T-cell (primary cell): ENCODE measurements at regions of chr2 and their contacts with region 1.

Region 1: DNA sequence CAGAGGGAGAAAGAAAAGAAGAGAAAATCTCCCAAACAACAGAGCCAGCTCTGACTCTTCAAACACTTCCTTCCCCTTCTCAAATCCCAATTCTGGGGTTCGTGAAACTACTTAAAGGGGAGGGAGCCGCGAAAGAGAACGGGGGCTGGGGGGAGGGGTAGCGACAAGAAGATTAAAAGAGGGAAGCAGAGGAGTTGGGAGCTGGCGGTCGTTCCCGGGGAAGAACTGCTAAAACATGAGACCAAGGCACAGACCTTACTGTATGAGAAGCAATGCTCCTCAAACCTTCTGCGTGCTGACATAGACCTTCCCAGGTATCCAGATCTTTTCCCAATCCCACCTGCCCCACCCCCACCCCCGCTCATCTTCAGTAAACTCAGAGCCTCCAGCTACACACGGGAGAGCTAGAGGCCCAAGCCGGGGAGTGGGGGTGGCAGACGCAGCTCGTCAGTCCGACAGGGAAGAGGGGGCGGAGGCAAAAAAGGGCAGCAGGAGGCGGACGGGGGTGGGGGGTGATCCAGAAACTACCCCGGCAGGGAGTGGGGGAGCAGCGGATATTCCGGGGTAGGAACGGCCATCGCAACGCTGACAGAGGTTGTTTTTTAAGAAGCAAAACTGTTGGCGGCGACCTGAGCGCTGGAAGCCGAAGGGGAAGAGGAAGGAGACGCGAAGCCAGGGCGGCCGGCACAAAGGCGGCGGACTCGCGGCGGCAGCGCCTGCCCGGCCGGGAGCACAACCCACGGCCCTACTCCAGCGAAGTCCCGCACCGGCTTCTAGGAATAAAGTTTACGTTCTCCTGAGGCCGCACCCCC is 1.0 kb downstream of the BAZ2B start:
- DNase-seq: peak in 33 of 35 experiments; percentile 2 to 52 (median 20)
- ATAC-seq: peak; percentile 66 to 78 (median 75)
- H3K4me3 ChIP-seq: peak overlapping the region; percentile 55 to 90
- H3K4me3 Mint-ChIP-seq: peak overlapping the region; percentile 84 to 91 (median 86)
- H3K27ac ChIP-seq: no peak overlapping the region
- H3K27ac Mint-ChIP-seq: no peak overlapping the region
- H3K4me1 ChIP-seq: peaks cover 9 to 13% of the 10 kb centered on the region in 2 experiments
- H3K4me1 Mint-ChIP-seq: peaks cover 13 to 16% (median 15%) of the 10 kb centered on the region in 3 donors
- H3K27me3 ChIP-seq: peaks cover 0 to 13% of the 10 kb centered on the region in 2 experiments
- H3K27me3 Mint-ChIP-seq: peaks cover 17 to 30% of the 10 kb centered on the region in 2 donors

Region 2: DNA sequence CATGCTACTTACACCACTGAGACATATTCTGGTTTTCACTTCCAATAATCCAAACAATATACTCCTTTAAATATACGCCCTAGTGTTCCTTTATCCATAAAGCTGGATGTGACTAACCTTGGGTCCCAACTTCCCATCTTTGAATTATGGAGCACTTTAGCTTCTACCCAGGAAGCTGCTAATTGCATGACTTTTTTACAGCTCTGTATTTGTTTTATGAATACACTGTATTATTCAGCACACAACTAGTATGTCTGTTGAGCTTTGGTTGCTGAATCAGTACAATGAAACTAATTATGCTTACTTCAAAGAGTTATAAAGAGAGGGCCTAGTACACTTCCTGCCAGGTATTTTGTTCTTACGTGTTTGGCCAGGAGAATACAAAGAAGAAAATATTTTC is 117.5 kb before region 1 on chr2:
- CTCF ChIA-PET with region 1: no interaction called
- POLR2A ChIA-PET with region 1: interaction called in 1 of 2 experiments, 10 read pairs
- DNase-seq: no peak
- ATAC-seq: peak in 1 of 4 experiments; percentile 29
- H3K4me3 ChIP-seq: no peak overlapping the region
- H3K4me3 Mint-ChIP-seq: no peak overlapping the region
- H3K27ac ChIP-seq: no peak overlapping the region
- H3K27ac Mint-ChIP-seq: peak overlapping the region; percentile 28 to 79
- H3K4me1 ChIP-seq: peaks cover 0 to 4% of the 10 kb centered on the region in 2 experiments
- H3K4me1 Mint-ChIP-seq: peaks cover 10 to 12% (median 11%) of the 10 kb centered on the region in 3 donors
- H3K27me3 ChIP-seq: no peaks in the 10 kb centered on the region
- H3K27me3 Mint-ChIP-seq: no peaks in the 10 kb centered on the region